Left ventricle myocardium superior (tissue), 1 donor: ENCODE measurements at regions of chr12 and their contacts with region 1.

Region 1: GRCh38 chr12:127280393-127281275 is 986.3 kb upstream of the TMEM132C start:
- DNase-seq: peak; percentile 54
- ATAC-seq: no peak

Region 2: GRCh38 chr12:127115468-127116035 is 165.1 kb before region 1 on chr12:
- intact Hi-C with region 1: loop called (anchors 10 kb)
- DNase-seq: no peak
- ATAC-seq: no peak